Left ventricle myocardium superior (tissue), 1 donor: ENCODE measurements at regions of chr22 and their contacts with region 1.

Region 1: GRCh38 chr22:46681010-46681409 is 57.0 kb downstream of the CERK start:
- DNase-seq: no peak
- ATAC-seq: no peak

Region 2: DNA sequence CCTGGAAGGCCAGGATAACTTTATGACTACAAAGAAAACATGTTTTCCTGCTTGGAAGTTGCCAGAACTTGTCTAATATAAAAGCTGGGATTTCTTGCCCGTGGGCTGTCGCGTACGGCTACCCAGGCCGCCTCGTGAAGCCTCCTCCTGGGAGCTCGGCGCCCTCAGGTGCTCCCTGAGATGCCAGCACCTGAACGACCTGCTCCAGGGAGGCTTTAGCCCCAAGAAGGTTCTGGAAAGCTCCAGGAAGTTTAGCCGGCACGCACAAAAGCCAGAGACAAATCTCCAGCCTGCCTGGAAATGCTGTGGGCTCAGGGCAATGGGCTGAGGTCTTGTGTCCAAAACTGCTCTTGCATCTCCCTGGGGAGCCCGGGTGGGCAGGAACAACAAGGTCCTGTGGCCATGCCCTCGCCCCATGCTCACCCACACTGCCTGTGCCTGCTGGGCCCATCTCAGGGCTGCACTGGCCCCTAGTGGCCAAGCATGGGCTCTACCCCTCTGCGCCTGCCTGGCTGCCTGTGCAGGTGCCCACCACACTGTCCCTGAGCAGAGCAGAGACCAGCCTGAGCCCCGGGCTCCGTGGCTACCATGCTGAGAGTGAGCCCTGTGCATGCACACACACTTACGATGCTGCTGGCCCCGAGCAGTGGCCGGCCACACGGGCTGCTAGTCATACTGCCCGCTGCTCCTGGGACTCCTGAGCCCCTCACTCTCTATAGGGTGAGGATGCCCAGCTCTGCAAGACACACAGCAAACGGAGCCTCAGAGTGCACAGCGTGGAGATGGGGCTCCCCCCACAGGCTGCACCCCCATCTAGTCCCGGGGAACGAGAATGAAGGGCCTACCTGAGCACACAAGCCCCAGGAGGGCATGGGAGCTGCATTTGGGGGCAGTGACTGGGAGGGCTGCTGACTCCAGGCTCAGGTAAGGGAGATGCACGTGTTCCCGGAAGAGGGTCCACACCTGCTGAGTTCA is 138.7 kb before region 1 on chr22:
- intact Hi-C with region 1: no loop called
- DNase-seq: peak; percentile 85
- ATAC-seq: peak; percentile 62

Region 3: DNA sequence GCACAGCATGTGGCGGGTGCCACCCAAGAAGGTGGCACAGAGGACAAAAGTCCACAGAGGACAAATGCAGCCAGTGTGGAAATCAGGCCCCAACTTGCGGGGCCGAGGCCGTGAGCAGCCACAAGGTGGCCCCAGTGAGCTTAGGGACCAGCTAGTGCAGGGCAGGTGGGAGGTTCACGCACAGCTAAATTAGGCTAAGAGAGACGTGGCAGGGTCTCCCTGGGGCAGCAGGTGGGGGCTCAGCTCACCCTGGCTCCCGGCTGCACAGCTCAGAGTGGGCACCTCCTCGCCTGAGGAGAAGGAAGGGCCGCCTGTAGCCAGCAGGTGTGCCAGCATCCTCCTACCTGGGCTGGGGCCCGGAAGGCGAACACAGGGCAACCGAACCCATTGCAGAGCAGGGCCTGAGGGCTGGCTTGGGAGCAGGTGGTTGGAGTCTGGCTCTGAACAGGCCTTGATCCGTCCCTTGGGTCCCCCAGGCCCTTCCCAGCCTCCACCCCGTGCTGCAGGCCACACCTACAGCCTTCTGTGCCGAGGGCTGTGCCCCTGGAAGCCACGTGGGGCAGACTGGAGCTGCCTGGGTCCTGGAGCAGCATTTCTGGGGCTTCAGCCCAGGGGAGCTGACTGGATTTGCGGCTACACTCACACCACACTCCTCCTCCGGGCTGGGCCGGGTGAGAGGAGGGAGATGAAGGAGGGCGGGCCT is 117.5 kb before region 1 on chr22:
- intact Hi-C with region 1: loop called (anchors 10 kb)
- DNase-seq: peak; percentile 91
- ATAC-seq: peak; percentile 92

Region 4: GRCh38 chr22:46737976-46738646 is 57.1 kb after region 1 on chr22 and contains the start of gene CERK:
- intact Hi-C with region 1: loop called (anchors 10 kb)
- DNase-seq: peak; percentile 87
- ATAC-seq: peak; percentile 80
- total RNA-seq, gene CERK: 87.5 TPM